Aorta (tissue), 5 donors: ENCODE measurements at regions of chr15 and their contacts with region 1.

Region 1: GRCh38 chr15:77083381-77084162 is 12.7 kb upstream of the TSPAN3 start:
- DNase-seq: peak; percentile 91
- ATAC-seq: peak; percentile 91
- H3K4me3 ChIP-seq: no peak overlapping the region
- H3K27ac ChIP-seq: peak overlapping the region in 1 of 2 donors; percentile 4
- H3K4me1 ChIP-seq: no peaks in the 10 kb centered on the region
- H3K27me3 ChIP-seq: no peaks in the 10 kb centered on the region

Region 2: GRCh38 chr15:77144492-77145070 is 61.0 kb after region 1 on chr15:
- intact Hi-C with region 1: loop called in 1 of 2 experiments (anchors 10 kb)
- DNase-seq: no peak
- ATAC-seq: no peak
- H3K4me3 ChIP-seq: no peak overlapping the region
- H3K27ac ChIP-seq: peak overlapping the region in 1 of 2 donors; percentile 90
- H3K4me1 ChIP-seq: peaks cover 4 to 7% of the 10 kb centered on the region in 2 donors
- H3K27me3 ChIP-seq: no peaks in the 10 kb centered on the region